MCF 10A (cell line): ENCODE measurements at regions of chr15 and their contacts with region 1.

Region 1: GRCh38 chr15:79184465-79184892 is 93.9 kb upstream of the RASGRF1 start:
- DNase-seq: peak; percentile 71
- H3K4me3 Mint-ChIP-seq: no peak overlapping the region
- H3K27ac Mint-ChIP-seq: no peak overlapping the region
- H3K4me1 Mint-ChIP-seq: no peaks in the 10 kb centered on the region
- H3K27me3 Mint-ChIP-seq: no peaks in the 10 kb centered on the region
- CTCF ChIP-seq: peak; percentile 83

Region 2: DNA sequence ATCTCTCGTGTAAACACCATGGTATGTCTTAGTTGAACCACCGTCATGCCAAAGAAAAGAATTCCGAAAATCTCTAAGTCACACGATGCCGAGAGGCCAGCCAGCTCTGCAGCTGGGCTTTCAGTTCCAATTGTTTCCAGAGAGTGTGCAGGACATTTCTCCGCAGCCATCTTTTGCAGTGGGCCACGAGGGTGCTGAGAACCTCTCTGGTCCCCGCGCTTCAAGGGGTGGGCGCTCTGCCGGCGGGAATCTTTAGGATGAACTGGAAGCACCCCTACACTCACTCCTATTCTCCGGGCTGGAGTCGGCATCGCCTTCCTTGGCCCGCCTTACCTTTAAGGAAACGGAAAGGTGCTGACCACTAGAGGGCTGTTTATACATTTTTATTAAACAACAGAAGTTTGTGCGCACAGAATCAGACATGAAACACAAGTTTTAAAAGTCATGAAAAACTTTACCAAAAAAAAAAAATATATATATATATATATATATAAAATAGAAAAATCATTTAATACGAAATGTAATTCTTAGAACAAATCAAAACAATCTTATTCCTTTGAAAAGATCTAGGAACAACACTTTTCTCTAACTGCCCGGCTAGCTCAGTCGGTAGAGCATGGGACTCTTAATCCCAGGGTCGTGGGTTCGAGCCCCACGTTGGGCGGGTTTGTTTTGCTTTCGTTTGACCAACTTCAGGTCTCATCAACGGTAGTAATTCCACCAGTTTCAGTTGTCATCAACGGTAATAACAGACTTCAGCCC is 324.3 kb before region 1 on chr15:
- CTCF ChIA-PET with region 1: no interaction called
- POLR2A ChIA-PET with region 1: no interaction called
- intact Hi-C with region 1: loop called (anchors 1 kb)
- DNase-seq: peak; percentile 84
- H3K4me3 Mint-ChIP-seq: peak overlapping the region; percentile 77
- H3K27ac Mint-ChIP-seq: peak overlapping the region; percentile 72
- H3K4me1 Mint-ChIP-seq: no peaks in the 10 kb centered on the region
- H3K27me3 Mint-ChIP-seq: no peaks in the 10 kb centered on the region
- CTCF ChIP-seq: peak; percentile 48

Region 3: DNA sequence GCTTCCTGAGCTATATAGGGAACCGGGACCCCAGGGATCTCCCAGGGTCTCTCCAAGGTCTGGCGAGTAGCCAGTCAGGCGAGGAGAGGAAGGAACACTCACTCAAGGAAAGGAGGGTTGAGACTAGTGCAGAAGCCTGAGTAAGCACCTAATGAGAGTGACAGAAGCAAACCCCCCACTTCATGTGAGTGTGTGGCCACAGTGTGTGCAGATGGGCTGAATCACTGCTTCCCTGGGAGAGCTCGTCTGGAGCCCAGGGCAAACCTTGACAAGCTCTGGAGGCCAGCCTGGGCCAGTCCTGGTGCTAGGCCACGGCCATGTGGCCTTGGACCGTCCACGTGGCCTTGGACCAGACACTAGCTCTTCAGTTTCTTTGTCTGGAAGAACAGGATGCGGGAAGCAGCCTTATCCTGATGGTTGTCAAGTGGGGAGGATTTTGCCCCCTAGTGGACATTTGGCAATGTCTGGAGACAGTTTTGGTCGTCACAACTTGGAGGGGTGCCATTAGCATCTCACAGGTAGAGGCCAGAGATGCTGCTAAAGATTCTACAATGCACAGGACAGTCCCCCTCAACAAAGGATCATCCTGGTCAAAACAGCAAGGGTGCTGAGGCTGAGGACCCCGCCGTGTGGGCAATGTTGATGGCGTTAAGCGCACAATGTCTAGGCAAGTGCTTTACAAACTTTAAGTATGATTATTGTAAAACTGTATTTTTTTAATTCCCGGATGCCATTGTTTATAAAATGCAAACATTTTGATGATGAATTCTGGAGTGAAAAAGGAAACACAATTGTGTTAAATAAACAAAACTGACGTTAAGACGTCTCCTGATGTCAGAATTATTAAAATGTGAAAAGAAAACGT is 204.8 kb before region 1 on chr15:
- CTCF ChIA-PET with region 1: interaction called, 5 read pairs
- POLR2A ChIA-PET with region 1: interaction called, 3 read pairs
- intact Hi-C with region 1: loop called (anchors 1 kb)
- DNase-seq: peak; percentile 91
- H3K4me3 Mint-ChIP-seq: no peak overlapping the region
- H3K27ac Mint-ChIP-seq: no peak overlapping the region
- H3K4me1 Mint-ChIP-seq: peaks cover 7% of the 10 kb centered on the region
- H3K27me3 Mint-ChIP-seq: no peaks in the 10 kb centered on the region
- CTCF ChIP-seq: peak; percentile 67

Region 4: DNA sequence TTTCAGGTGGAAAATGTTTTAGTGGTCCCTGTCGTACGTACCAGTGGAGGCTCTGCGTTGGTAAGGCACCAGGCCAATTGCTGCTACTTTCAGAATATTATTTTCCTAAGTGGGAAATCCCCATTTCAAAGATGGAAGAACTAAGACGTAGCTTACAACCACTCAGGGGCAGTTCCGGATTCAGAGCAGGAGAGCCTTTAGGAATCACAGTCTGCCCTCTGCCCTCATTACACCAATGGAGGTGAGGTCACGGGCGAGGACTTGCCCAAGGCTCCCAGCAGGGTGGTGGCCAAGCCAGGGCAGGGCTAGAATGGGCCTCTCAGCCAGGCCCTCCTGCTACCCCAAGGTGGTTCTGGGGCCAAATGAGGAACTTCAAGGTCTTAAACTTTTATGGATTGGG is 166.5 kb before region 1 on chr15:
- CTCF ChIA-PET with region 1: interaction called, 333 read pairs
- POLR2A ChIA-PET with region 1: no interaction called
- intact Hi-C with region 1: no loop called
- DNase-seq: no peak
- H3K4me3 Mint-ChIP-seq: no peak overlapping the region
- H3K27ac Mint-ChIP-seq: no peak overlapping the region
- H3K4me1 Mint-ChIP-seq: no peaks in the 10 kb centered on the region
- H3K27me3 Mint-ChIP-seq: no peaks in the 10 kb centered on the region
- CTCF ChIP-seq: no peak

Region 5: GRCh38 chr15:79046696-79047404 is 137.6 kb before region 1 on chr15:
- CTCF ChIA-PET with region 1: interaction called, 10 read pairs
- POLR2A ChIA-PET with region 1: no interaction called
- intact Hi-C with region 1: no loop called
- DNase-seq: no peak
- H3K4me3 Mint-ChIP-seq: no peak overlapping the region
- H3K27ac Mint-ChIP-seq: no peak overlapping the region
- H3K4me1 Mint-ChIP-seq: no peaks in the 10 kb centered on the region
- H3K27me3 Mint-ChIP-seq: peaks cover 6% of the 10 kb centered on the region
- CTCF ChIP-seq: no peak

Region 6: DNA sequence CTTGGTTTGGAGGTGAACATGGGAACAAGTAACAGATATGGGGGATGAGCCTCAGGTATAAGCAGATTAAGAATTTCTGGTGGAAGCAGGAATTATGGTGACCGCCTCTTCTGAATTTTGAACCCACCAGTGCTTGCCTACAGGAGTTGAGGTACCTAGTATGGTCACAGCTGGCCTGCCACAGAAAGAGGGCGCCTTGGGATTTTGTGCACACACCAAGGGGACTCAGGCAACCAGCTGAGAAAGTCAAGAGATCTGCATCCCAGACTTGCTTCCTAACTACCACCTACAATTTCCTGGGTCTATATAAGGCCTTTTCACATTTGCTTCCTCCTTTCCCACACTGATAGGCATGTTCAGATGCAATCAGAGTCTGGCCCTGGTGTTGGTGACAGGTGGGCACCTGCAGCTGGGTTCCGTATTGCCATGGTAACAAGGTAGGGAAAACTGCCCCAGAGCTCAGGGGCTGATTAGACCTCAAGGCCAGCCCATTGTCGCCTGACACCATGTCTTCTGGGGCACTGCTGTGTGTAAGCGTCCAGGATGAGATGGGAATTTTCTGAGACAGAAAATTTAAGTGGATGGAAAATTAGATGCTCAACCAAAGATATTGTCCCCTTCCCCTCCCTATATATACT is 18.0 kb before region 1 on chr15:
- CTCF ChIA-PET with region 1: interaction called, 10 read pairs
- POLR2A ChIA-PET with region 1: interaction called, 3 read pairs
- intact Hi-C with region 1: no loop called
- DNase-seq: no peak
- H3K4me3 Mint-ChIP-seq: no peak overlapping the region
- H3K27ac Mint-ChIP-seq: no peak overlapping the region
- H3K4me1 Mint-ChIP-seq: peaks cover 21% of the 10 kb centered on the region
- H3K27me3 Mint-ChIP-seq: no peaks in the 10 kb centered on the region
- CTCF ChIP-seq: no peak

Region 7: DNA sequence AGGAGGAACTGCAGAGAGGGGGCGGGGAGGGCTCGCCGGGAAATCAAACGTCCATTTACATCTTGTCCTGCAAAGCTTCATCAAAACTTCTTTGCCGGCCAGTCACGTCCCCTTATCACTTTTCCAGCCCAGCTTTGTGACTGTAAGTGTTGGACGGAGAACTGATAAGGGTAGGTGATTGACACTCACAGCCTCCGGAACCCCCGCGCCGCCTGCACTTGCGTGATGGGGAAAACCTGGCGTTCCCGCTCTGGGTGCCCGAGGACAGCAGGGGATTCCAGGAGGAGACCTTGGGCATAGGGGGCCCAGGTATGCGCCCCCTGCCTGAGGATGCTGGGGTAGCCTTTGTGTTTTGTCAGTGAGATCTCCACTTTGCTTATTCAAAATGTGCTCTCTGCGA is 25.2 kb after region 1 on chr15:
- CTCF ChIA-PET with region 1: interaction called, 36 read pairs
- POLR2A ChIA-PET with region 1: no interaction called
- intact Hi-C with region 1: no loop called
- DNase-seq: no peak
- H3K4me3 Mint-ChIP-seq: no peak overlapping the region
- H3K27ac Mint-ChIP-seq: no peak overlapping the region
- H3K4me1 Mint-ChIP-seq: no peaks in the 10 kb centered on the region
- H3K27me3 Mint-ChIP-seq: peaks cover 55% of the 10 kb centered on the region
- CTCF ChIP-seq: no peak